ENCODE measurements at regions of chr3 and their contacts with region 1.

Region 1: GRCh38 chr3:157606011-157606851 is 103.0 kb upstream of the VEPH1 start:
- DNase-seq: peak in 33 of 35 experiments; percentile 7 to 58 (median 38)
- ATAC-seq: peak; percentile 65 to 78 (median 68)
- H3K4me3 ChIP-seq: no peak overlapping the region
- H3K4me3 Mint-ChIP-seq: no peak overlapping the region
- H3K27ac ChIP-seq: no peak overlapping the region
- H3K27ac Mint-ChIP-seq: no peak overlapping the region
- H3K4me1 ChIP-seq: no peaks in the 10 kb centered on the region
- H3K4me1 Mint-ChIP-seq: peaks cover 5 to 6% (median 5%) of the 10 kb centered on the region in 3 donors
- H3K27me3 ChIP-seq: peaks cover 0 to 8% of the 10 kb centered on the region in 2 experiments
- H3K27me3 Mint-ChIP-seq: peaks cover 6 to 17% of the 10 kb centered on the region in 2 donors

Region 2: DNA sequence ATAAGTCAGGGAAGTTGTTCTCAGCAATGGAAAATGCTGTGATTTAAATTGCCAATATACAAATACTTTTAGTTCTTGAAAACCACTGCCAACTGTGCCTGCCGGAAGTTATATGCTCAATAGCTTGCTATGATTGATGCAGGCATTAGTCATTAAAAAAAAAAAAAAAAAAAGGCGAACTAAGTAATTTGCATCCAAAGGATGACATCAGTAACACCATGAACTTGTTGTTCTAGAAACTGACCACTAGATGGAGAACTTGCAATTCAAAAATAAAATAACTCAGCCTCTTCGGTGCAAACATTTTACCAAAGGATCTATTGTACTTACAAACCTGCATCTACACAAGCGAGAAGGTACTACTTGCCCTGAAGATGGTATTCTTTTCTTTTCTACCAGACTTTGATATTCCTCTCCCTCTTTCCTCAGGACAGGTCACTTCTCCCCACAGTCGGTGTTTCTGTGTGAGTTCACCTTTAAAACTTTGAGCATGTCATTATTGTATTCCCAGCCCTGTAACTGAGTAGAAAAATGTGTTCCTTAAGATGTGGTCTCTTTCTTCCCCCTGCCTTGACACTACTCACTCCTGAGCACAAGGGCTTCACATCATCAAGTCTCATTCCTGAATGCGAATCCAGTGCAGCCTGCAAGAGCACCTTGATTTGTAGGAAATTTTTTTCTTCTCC is 12.0 kb after region 1 on chr3:
- CTCF ChIA-PET with region 1: interaction called, 6 to 11 read pairs
- POLR2A ChIA-PET with region 1: interaction called in 1 of 2 experiments, 3 read pairs
- DNase-seq: peak in 2 of 35 experiments; percentile 3 to 52
- ATAC-seq: peak in 2 of 4 experiments; percentile 58 to 80
- H3K4me3 ChIP-seq: no peak overlapping the region
- H3K4me3 Mint-ChIP-seq: no peak overlapping the region
- H3K27ac ChIP-seq: no peak overlapping the region
- H3K27ac Mint-ChIP-seq: peak overlapping the region in 1 of 2 donors; percentile 24
- H3K4me1 ChIP-seq: peaks cover 0 to 2% of the 10 kb centered on the region in 2 experiments
- H3K4me1 Mint-ChIP-seq: peaks cover 6 to 8% (median 7%) of the 10 kb centered on the region in 3 donors
- H3K27me3 ChIP-seq: no peaks in the 10 kb centered on the region
- H3K27me3 Mint-ChIP-seq: peaks cover 12 to 15% of the 10 kb centered on the region in 2 donors

Region 3: GRCh38 chr3:157669416-157669815 is 63.2 kb after region 1 on chr3:
- CTCF ChIA-PET with region 1: no interaction called
- POLR2A ChIA-PET with region 1: no interaction called
- DNase-seq: no peak
- ATAC-seq: no peak
- H3K4me3 ChIP-seq: no peak overlapping the region
- H3K4me3 Mint-ChIP-seq: no peak overlapping the region
- H3K27ac ChIP-seq: no peak overlapping the region
- H3K27ac Mint-ChIP-seq: no peak overlapping the region
- H3K4me1 ChIP-seq: no peaks in the 10 kb centered on the region
- H3K4me1 Mint-ChIP-seq: no peaks in the 10 kb centered on the region
- H3K27me3 ChIP-seq: no peaks in the 10 kb centered on the region
- H3K27me3 Mint-ChIP-seq: peaks cover 0 to 3% of the 10 kb centered on the region in 2 donors

Measured in T-cell (primary cell).